Heart left ventricle (tissue), 16 donors: ENCODE measurements at regions of chr5 and their contacts with region 1.

Region 1: GRCh38 chr5:96614110-96614691 is 48.0 kb upstream of the CAST start:
- DNase-seq: peak in 3 of 5 donors; percentile 46 to 60 (median 58)
- ATAC-seq: peak; percentile 63 to 90 (median 81)
- H3K4me3 ChIP-seq: peak overlapping the region in 4 of 12 donors; percentile 4 to 29 (median 23)
- H3K27ac ChIP-seq: peak overlapping the region in 11 of 12 donors; percentile 1 to 72 (median 60)
- H3K4me1 ChIP-seq: peaks cover 0 to 22% (median 16%) of the 10 kb centered on the region in 12 donors
- H3K27me3 ChIP-seq: no peaks in the 10 kb centered on the region
- CTCF ChIP-seq: peak; percentile 31 to 73 (median 60)
- POLR2A ChIP-seq: no peak

Region 2: DNA sequence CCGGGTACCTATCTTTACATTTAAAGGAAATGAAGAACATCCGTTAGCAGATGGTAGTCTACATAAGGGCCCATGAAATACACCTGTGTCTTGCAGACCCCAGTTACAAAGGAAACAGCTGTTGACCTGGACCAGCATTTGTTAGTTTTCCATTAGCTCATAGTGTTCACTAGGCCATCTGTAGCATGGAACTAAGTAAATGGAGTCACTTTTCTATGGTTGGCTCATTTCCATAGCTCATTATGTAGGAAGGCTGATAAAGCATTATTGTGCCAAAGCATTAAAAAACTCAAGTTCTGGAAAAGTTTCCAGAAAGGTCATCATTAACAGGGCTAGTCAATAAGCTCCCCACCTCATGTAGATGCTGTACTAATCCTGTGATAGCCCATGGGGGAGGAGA is 243.2 kb before region 1 on chr5:
- intact Hi-C with region 1: no loop called
- DNase-seq: no peak
- ATAC-seq: no peak
- H3K4me3 ChIP-seq: no peak overlapping the region
- H3K27ac ChIP-seq: no peak overlapping the region
- H3K4me1 ChIP-seq: no peaks in the 10 kb centered on the region
- H3K27me3 ChIP-seq: no peaks in the 10 kb centered on the region
- CTCF ChIP-seq: no peak
- POLR2A ChIP-seq: no peak

Region 3: GRCh38 chr5:96509721-96510333 is 104.4 kb before region 1 on chr5:
- intact Hi-C with region 1: no loop called
- DNase-seq: no peak
- ATAC-seq: no peak
- H3K4me3 ChIP-seq: no peak overlapping the region
- H3K27ac ChIP-seq: no peak overlapping the region
- H3K4me1 ChIP-seq: no peaks in the 10 kb centered on the region
- H3K27me3 ChIP-seq: no peaks in the 10 kb centered on the region
- CTCF ChIP-seq: no peak
- POLR2A ChIP-seq: no peak

Region 4: DNA sequence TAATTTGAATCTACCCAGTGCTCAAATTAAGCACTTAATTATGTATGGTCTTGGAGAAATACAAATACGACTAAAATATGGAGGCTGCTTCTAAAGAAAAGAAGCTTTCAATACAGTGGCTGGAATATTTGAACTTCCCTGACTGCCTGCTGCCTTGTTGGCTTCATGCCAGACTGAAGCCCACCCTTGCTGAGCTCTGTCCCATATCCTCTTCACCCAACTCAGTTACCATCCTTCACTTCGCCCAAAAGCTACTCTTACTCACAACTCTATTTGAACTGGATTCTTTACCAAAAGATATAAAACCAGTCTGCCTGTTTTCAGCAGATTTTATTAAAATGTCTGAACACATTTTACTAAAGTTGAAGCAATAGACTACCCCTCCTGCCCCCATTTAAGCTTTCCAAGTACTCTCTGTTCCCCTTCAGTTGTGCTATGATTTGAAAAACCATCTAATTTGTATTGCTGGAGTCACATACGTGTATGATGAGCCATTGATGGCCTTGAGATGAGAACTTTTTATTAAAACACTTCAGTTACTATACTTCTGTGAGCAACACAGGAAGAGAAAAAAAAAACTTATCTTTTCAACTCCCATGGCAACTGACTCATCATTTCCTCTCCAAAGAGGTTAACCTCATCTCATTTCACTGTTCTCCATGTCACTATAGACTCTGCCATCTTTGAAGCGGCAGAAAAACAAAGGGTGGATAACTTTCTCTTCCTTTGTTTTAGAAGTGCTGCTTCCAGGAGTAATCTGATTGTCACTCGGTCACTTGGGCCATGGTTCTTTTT is 77.0 kb before region 1 on chr5:
- intact Hi-C with region 1: no loop called
- DNase-seq: no peak
- ATAC-seq: peak in 1 of 4 donors; percentile 33
- H3K4me3 ChIP-seq: no peak overlapping the region
- H3K27ac ChIP-seq: peak overlapping the region in 1 of 12 donors; percentile 60
- H3K4me1 ChIP-seq: peaks cover 0 to 18% (median 0%) of the 10 kb centered on the region in 12 donors
- H3K27me3 ChIP-seq: no peaks in the 10 kb centered on the region
- CTCF ChIP-seq: no peak
- POLR2A ChIP-seq: no peak

Region 5: DNA sequence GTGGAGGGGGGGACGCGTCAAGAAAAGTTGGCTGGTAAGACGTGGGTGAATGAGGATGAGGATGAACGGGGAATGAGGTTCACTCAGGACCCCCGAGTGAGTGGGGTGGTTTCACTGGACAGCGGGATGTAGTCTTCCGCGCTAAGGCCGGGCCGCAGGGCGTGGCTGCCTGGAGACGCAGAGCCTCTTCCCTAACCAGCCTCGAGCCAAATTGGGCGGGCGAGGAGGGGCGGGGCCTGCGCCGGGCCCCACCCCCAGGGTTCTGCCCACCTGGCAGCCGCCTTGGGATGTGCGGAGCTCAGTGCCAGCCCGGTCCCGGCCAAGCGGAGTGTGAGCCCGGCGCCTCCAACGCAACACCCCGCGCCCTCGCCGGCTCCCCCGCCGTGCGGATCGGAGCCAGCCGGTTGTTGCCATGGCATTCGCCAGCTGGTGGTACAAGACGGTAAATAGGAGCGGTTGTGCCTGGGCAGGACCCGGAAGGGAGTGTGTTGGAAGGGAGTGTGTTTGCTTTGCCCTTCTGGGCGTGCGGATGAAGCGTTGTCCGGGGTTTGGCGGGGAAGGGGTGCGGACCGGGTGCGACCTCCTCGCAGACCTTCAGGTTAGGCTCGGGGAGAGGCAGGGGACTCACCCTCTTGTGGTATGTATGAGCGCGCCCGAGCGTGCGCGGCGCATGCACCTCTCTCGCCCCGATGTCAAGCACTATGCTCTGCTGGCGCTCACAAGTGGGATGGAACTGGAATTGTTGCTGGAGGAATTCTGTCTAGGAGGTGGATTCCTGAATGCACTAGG is 48.7 kb after region 1 on chr5:
- intact Hi-C with region 1: loop called in 2 of 10 experiments (anchors 2 to 5 kb)
- DNase-seq: peak; percentile 91 to 96 (median 94)
- ATAC-seq: peak; percentile 87 to 95 (median 94)
- H3K4me3 ChIP-seq: peak overlapping the region; percentile 68 to 99 (median 92)
- H3K27ac ChIP-seq: peak overlapping the region; percentile 88 to 100 (median 98)
- H3K4me1 ChIP-seq: peaks cover 0 to 43% (median 21%) of the 10 kb centered on the region in 12 donors
- H3K27me3 ChIP-seq: no peaks in the 10 kb centered on the region
- CTCF ChIP-seq: no peak
- POLR2A ChIP-seq: peak; percentile 28 to 81

Region 6: GRCh38 chr5:96687812-96688453 is 73.7 kb after region 1 on chr5:
- intact Hi-C with region 1: loop called in 8 of 10 experiments (anchors 2 to 10 kb)
- DNase-seq: no peak
- ATAC-seq: peak in 3 of 4 donors; percentile 75 to 80 (median 76)
- H3K4me3 ChIP-seq: peak overlapping the region in 2 of 12 donors; percentile 3 to 12
- H3K27ac ChIP-seq: peak overlapping the region in 1 of 12 donors; percentile 47
- H3K4me1 ChIP-seq: peaks cover 0 to 34% (median 10%) of the 10 kb centered on the region in 12 donors
- H3K27me3 ChIP-seq: no peaks in the 10 kb centered on the region
- CTCF ChIP-seq: peak; percentile 39 to 65 (median 48)
- POLR2A ChIP-seq: no peak

Region 7: DNA sequence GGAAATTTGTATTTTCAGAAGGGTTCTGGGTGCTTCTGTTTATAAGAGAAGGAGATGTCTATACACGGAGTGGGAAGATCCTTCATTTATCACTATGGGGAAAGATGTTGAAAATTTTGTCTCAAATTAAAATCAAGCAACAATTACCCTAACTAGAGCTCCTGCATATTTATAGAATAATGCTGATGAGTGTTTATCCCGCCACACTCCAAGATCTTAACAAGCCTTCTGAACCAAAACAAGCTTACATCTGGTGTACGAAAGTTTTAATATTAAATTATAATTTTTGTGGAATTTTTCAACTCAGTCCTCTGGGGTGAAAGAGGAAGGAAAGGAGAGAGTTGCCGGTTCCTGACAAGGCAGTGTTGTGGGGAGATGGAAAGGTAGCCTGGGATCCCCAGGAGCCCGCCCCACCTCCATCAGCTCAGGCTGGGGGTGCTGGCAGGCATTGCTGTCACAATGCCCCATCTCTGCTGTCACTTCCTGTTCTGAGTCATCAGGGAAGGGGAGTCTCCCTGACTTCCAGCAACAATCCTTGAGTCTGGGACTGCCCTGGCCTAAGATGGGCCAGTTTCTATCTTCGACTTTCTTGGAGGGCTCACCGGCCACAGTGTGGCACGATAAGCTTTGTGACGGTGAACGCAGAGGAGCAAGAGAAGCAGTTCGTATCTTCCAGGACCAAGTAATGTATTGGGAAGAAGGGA is 129.0 kb after region 1 on chr5:
- intact Hi-C with region 1: loop called in 4 of 10 experiments (anchors 5 to 10 kb)
- DNase-seq: peak in 3 of 5 donors; percentile 43 to 74 (median 50)
- ATAC-seq: peak; percentile 43 to 70 (median 62)
- H3K4me3 ChIP-seq: peak overlapping the region in 8 of 12 donors; percentile 5 to 34 (median 10)
- H3K27ac ChIP-seq: peak overlapping the region; percentile 66 to 88 (median 79)
- H3K4me1 ChIP-seq: peaks cover 0 to 72% (median 48%) of the 10 kb centered on the region in 12 donors
- H3K27me3 ChIP-seq: no peaks in the 10 kb centered on the region
- CTCF ChIP-seq: no peak
- POLR2A ChIP-seq: peak in 1 of 2 donors; percentile 33

Region 8: GRCh38 chr5:97162045-97162444 is 547.8 kb after region 1 on chr5:
- intact Hi-C with region 1: loop called (anchors 2 to 10 kb)
- DNase-seq: peak in 3 of 5 donors; percentile 33 to 59 (median 44)
- ATAC-seq: peak in 3 of 4 donors; percentile 71 to 77 (median 76)
- H3K4me3 ChIP-seq: no peak overlapping the region
- H3K27ac ChIP-seq: no peak overlapping the region
- H3K4me1 ChIP-seq: peaks cover 0 to 6% (median 0%) of the 10 kb centered on the region in 12 donors
- H3K27me3 ChIP-seq: no peaks in the 10 kb centered on the region
- CTCF ChIP-seq: peak; percentile 81 to 95 (median 89)
- POLR2A ChIP-seq: no peak